ENCODE measurements at regions of chr12 and their contacts with region 1.

Region 1: GRCh38 chr12:70576346-70577282 is 60.6 kb downstream of the PTPRB start:
- DNase-seq: no peak
- ATAC-seq: peak; percentile 80

Region 2: GRCh38 chr12:69879041-69879960 is 697.3 kb before region 1 on chr12:
- intact Hi-C with region 1: loop called in 1 of 2 experiments (anchors 5 kb)
- DNase-seq: peak; percentile 35 to 82
- ATAC-seq: peak; percentile 95

Region 3: DNA sequence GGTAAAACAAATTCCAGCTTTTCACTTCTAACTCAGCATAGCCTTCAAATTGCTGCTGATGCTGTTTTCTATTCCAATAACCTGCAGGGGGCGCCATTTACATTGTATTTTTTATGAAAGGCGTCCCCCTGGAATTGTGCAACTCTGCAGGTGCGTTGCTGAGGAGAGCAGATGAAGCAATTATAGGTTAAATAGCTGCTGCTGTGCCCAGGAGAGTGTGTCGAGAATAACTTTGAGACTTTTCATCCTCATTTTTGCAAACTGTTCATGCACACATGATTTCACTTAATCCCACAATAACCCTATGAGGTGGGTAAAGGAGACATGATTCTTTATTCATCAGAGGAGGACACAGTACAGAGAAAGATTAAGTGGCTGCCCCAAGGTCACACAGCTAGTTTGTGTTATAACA is 675.9 kb before region 1 on chr12:
- intact Hi-C with region 1: loop called in 1 of 2 experiments (anchors 10 kb)
- DNase-seq: peak; percentile 68 to 86
- ATAC-seq: peak; percentile 85

Region 4: GRCh38 chr12:70353780-70354660 is 222.6 kb before region 1 on chr12:
- intact Hi-C with region 1: loop called in 1 of 2 experiments (anchors 10 kb)
- DNase-seq: no peak
- ATAC-seq: no peak

Region 5: GRCh38 chr12:70774055-70774454 is 197.4 kb after region 1 on chr12:
- intact Hi-C with region 1: no loop called
- DNase-seq: no peak
- ATAC-seq: no peak

Measured in left colon (tissue), 2 donors.